Mammary epithelial cell (primary cell): ENCODE measurements at regions of chr2 and their contacts with region 1.

Region 1: GRCh38 chr2:39523308-39524044 is 86.4 kb upstream of the MAP4K3 start:
- DNase-seq: peak; percentile 83
- H3K4me3 ChIP-seq: no peak overlapping the region
- H3K27ac ChIP-seq: peak overlapping the region; percentile 69
- H3K4me1 ChIP-seq: peaks cover 30% of the 10 kb centered on the region
- H3K27me3 ChIP-seq: no peaks in the 10 kb centered on the region
- CTCF ChIP-seq: no peak

Region 2: GRCh38 chr2:38907743-38908562 is 615.5 kb before region 1 on chr2:
- CTCF ChIA-PET with region 1: no interaction called
- dilution Hi-C with region 1: no loop called
- in situ Hi-C with region 1: no loop called
- intact Hi-C with region 1: no loop called
- DNase-seq: peak; percentile 12
- H3K4me3 ChIP-seq: no peak overlapping the region
- H3K27ac ChIP-seq: no peak overlapping the region
- H3K4me1 ChIP-seq: peaks cover 22% of the 10 kb centered on the region
- H3K27me3 ChIP-seq: no peaks in the 10 kb centered on the region
- CTCF ChIP-seq: no peak

Region 3: GRCh38 chr2:39547811-39548719 is 24.6 kb after region 1 on chr2:
- CTCF ChIA-PET with region 1: no interaction called
- dilution Hi-C with region 1: no loop called
- in situ Hi-C with region 1: no loop called
- intact Hi-C with region 1: loop called (anchors 1 kb)
- DNase-seq: peak; percentile 91
- H3K4me3 ChIP-seq: no peak overlapping the region
- H3K27ac ChIP-seq: peak overlapping the region; percentile 92
- H3K4me1 ChIP-seq: peaks cover 41% of the 10 kb centered on the region
- H3K27me3 ChIP-seq: no peaks in the 10 kb centered on the region
- CTCF ChIP-seq: no peak

Region 4: DNA sequence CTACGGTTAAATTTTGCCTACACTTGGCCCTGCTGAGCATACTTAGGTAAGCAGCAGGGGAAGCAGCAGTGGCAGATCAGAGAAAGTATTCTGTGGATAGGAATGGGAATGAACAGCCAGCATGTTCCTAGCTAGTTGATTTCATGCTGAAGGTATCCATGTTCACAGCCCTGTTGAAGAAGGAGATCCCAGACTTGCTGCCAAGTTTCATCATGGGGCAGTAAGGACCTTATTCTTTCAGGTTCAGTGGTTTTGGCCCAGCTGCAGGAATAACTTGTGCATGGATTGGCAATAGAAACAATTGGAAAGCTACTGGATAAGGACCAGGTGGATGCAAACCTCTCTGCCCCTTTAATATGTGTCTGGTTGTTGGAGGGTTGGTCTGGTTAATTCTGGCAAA is 44.0 kb after region 1 on chr2:
- CTCF ChIA-PET with region 1: no interaction called
- dilution Hi-C with region 1: no loop called
- in situ Hi-C with region 1: no loop called
- intact Hi-C with region 1: no loop called
- DNase-seq: no peak
- H3K4me3 ChIP-seq: no peak overlapping the region
- H3K27ac ChIP-seq: no peak overlapping the region
- H3K4me1 ChIP-seq: peaks cover 33% of the 10 kb centered on the region
- H3K27me3 ChIP-seq: no peaks in the 10 kb centered on the region
- CTCF ChIP-seq: no peak

Region 5: GRCh38 chr2:39584283-39584965 is 60.9 kb after region 1 on chr2:
- CTCF ChIA-PET with region 1: no interaction called
- dilution Hi-C with region 1: no loop called
- in situ Hi-C with region 1: no loop called
- intact Hi-C with region 1: no loop called
- DNase-seq: peak; percentile 55
- H3K4me3 ChIP-seq: no peak overlapping the region
- H3K27ac ChIP-seq: no peak overlapping the region
- H3K4me1 ChIP-seq: peaks cover 3% of the 10 kb centered on the region
- H3K27me3 ChIP-seq: no peaks in the 10 kb centered on the region
- CTCF ChIP-seq: no peak

Region 6: GRCh38 chr2:39679805-39680204 is 156.3 kb after region 1 on chr2:
- CTCF ChIA-PET with region 1: no interaction called
- dilution Hi-C with region 1: no loop called
- in situ Hi-C with region 1: loop called in 1 of 2 experiments (anchors 10 kb)
- intact Hi-C with region 1: no loop called
- DNase-seq: no peak
- H3K4me3 ChIP-seq: no peak overlapping the region
- H3K27ac ChIP-seq: no peak overlapping the region
- H3K4me1 ChIP-seq: no peaks in the 10 kb centered on the region
- H3K27me3 ChIP-seq: no peaks in the 10 kb centered on the region
- CTCF ChIP-seq: no peak